Activated CD4-positive, alpha-beta memory T cell treated with anti-CD3 and anti-CD28 coated beads for 36 hours (primary cell): ENCODE measurements at regions of chr16 and their contacts with region 1.

Region 1: GRCh38 chr16:67480833-67481560 is at the start of gene ATP6V0D1:
- DNase-seq: peak; percentile 99
- H3K4me3 Mint-ChIP-seq: peak within 1 kb of the TSS; percentile 99
- H3K27ac Mint-ChIP-seq: peak within 1 kb of the TSS; percentile 97
- H3K4me1 Mint-ChIP-seq: peaks cover 43% of the 10 kb centered on the region
- H3K27me3 Mint-ChIP-seq: no peaks in the 10 kb centered on the region
- total RNA-seq, gene ATP6V0D1: 25.0 to 26.3 TPM

Region 2: DNA sequence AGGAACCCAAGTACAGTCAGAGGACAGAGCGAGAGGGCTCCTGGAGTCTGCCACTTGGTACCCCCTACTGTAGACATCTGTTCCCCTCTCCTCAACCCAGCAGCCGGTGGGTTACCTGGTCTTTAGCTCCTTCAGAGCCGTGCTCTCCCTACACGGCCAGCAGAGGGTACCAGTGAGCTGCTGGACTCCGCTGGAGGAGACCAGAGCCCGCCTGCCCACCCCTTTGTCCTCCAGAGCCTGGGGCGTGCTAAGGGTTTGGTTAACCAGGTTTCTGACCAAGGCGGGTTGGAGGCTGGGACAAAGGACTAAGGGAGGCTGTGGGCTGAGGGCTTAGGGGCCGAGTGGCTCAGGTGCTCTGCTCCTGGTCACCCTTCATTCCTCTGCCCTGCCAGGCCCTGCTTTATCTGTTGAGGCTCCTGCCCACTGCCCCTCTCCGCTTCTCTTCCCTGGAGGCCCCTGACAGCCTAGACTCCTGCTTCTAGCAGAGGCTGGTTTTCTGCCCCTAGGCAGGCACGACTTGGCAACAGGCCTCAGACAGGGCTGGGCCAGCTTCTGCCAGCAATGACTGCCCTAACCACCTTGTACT is 52.8 kb before region 1 on chr16:
- CTCF ChIA-PET with region 1: interaction called, 14 read pairs
- POLR2A ChIA-PET with region 1: interaction called, 3 read pairs
- intact Hi-C with region 1: no loop called
- DNase-seq: peak; percentile 76
- H3K4me3 Mint-ChIP-seq: no peak overlapping the region
- H3K27ac Mint-ChIP-seq: no peak overlapping the region
- H3K4me1 Mint-ChIP-seq: peaks cover 10% of the 10 kb centered on the region
- H3K27me3 Mint-ChIP-seq: peaks cover 39% of the 10 kb centered on the region

Region 3: GRCh38 chr16:67470359-67470758 is 10.6 kb before region 1 on chr16:
- CTCF ChIA-PET with region 1: interaction called, 11 read pairs
- POLR2A ChIA-PET with region 1: no interaction called
- intact Hi-C with region 1: no loop called
- DNase-seq: no peak
- H3K4me3 Mint-ChIP-seq: no peak overlapping the region
- H3K27ac Mint-ChIP-seq: no peak overlapping the region
- H3K4me1 Mint-ChIP-seq: peaks cover 28% of the 10 kb centered on the region
- H3K27me3 Mint-ChIP-seq: no peaks in the 10 kb centered on the region

Region 4: GRCh38 chr16:67546761-67547422 is 65.9 kb after region 1 on chr16:
- CTCF ChIA-PET with region 1: interaction called, 11 read pairs
- POLR2A ChIA-PET with region 1: interaction called, 3 read pairs
- intact Hi-C with region 1: no loop called
- DNase-seq: peak; percentile 81
- H3K4me3 Mint-ChIP-seq: no peak overlapping the region
- H3K27ac Mint-ChIP-seq: peak overlapping the region; percentile 89
- H3K4me1 Mint-ChIP-seq: peaks cover 34% of the 10 kb centered on the region
- H3K27me3 Mint-ChIP-seq: no peaks in the 10 kb centered on the region

Region 5: GRCh38 chr16:67667817-67668494 is 187.0 kb after region 1 on chr16:
- CTCF ChIA-PET with region 1: interaction called, 10 read pairs
- POLR2A ChIA-PET with region 1: interaction called, 3 read pairs
- intact Hi-C with region 1: no loop called
- DNase-seq: peak; percentile 90
- H3K4me3 Mint-ChIP-seq: peak overlapping the region; percentile 82
- H3K27ac Mint-ChIP-seq: no peak overlapping the region
- H3K4me1 Mint-ChIP-seq: peaks cover 15% of the 10 kb centered on the region
- H3K27me3 Mint-ChIP-seq: no peaks in the 10 kb centered on the region